CD4-positive, alpha-beta T cell (primary cell): ENCODE measurements at regions of chr12 and their contacts with region 1.

Region 1: DNA sequence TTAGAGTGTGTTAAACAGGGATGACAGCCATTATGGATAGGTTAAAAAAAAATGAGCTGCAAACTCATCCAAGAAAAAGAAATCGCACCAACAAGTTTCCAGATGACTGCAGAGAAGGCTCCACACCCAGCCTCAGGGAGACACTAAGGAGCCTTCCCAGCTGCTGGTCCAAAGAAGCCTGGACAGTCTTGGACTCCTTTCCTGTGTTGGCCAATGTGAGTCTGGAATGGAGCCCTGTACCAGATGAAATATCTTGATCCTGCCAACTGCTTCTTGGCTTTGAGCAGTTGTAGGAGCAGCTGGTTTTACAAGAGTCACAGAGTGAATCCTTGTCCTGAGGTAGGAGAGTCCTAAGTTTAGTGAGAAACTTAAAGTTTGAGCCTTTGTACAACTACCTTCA is 44.5 kb downstream of the SLC38A1 start:
- DNase-seq: no peak
- ATAC-seq: no peak
- H3K4me3 ChIP-seq: no peak overlapping the region
- H3K4me3 Mint-ChIP-seq: no peak overlapping the region
- H3K27ac ChIP-seq: peak overlapping the region in 1 of 2 donors; percentile 50
- H3K27ac Mint-ChIP-seq: peak overlapping the region; percentile 96
- H3K4me1 ChIP-seq: peaks cover 49% of the 10 kb centered on the region
- H3K4me1 Mint-ChIP-seq: peaks cover 96% of the 10 kb centered on the region
- H3K27me3 ChIP-seq: no peaks in the 10 kb centered on the region
- H3K27me3 Mint-ChIP-seq: no peaks in the 10 kb centered on the region
- CTCF ChIP-seq: no peak

Region 2: DNA sequence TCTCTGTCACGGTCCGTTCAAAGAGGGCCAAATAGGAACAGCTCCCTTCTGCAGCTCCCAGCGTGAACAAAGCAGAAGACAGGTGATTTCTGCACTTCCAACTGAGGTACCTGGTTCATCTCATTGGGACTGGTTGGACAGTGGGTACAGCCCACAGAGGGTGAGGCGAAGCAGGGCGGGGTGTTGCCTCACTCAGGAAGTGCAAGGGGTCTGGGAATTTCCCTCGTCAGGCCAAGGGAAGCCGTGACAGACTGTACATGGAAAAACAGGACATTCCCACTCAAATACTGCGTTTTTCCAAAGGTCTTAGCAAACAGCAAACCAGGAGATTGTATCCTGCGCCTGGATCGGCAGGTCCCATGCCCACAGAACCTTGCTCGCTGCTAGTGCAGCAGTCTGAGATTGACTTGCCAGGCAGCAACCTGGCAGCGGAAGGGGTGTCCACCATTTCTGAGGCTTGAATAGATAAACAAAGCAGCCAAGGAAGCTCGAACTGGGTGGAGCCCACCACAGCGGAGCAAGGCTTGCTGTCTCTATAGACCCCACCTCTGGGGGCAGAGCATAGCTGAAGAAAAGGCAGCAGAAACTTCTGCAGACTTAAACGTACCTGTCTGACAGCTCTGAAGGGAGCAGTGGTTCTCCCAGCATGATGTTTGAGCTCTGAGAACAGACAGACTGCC is 21.8 kb after region 1 on chr12:
- CTCF ChIA-PET with region 1: no interaction called
- POLR2A ChIA-PET with region 1: interaction called, 4 read pairs
- intact Hi-C with region 1: loop called in 1 of 2 experiments (anchors 2 kb)
- DNase-seq: peak in 5 of 14 experiments; percentile 9 to 38 (median 27)
- ATAC-seq: peak; percentile 42
- H3K4me3 ChIP-seq: no peak overlapping the region
- H3K4me3 Mint-ChIP-seq: peak overlapping the region; percentile 43
- H3K27ac ChIP-seq: peak overlapping the region; percentile 33 to 50
- H3K27ac Mint-ChIP-seq: peak overlapping the region; percentile 54
- H3K4me1 ChIP-seq: peaks cover 30% of the 10 kb centered on the region
- H3K4me1 Mint-ChIP-seq: peaks cover 97% of the 10 kb centered on the region
- H3K27me3 ChIP-seq: no peaks in the 10 kb centered on the region
- H3K27me3 Mint-ChIP-seq: no peaks in the 10 kb centered on the region
- CTCF ChIP-seq: no peak